ENCODE measurements at regions of chr6 and their contacts with region 1.

Region 1: GRCh38 chr6:70107852-70108629 is 194.8 kb downstream of the COL9A1 start:
- DNase-seq: no peak
- ATAC-seq: no peak
- H3K4me3 ChIP-seq: no peak overlapping the region
- H3K27ac ChIP-seq: no peak overlapping the region
- H3K4me1 ChIP-seq: no peaks in the 10 kb centered on the region
- H3K27me3 ChIP-seq: no peaks in the 10 kb centered on the region
- CTCF ChIP-seq: peak; percentile 14 to 76 (median 68)

Region 2: DNA sequence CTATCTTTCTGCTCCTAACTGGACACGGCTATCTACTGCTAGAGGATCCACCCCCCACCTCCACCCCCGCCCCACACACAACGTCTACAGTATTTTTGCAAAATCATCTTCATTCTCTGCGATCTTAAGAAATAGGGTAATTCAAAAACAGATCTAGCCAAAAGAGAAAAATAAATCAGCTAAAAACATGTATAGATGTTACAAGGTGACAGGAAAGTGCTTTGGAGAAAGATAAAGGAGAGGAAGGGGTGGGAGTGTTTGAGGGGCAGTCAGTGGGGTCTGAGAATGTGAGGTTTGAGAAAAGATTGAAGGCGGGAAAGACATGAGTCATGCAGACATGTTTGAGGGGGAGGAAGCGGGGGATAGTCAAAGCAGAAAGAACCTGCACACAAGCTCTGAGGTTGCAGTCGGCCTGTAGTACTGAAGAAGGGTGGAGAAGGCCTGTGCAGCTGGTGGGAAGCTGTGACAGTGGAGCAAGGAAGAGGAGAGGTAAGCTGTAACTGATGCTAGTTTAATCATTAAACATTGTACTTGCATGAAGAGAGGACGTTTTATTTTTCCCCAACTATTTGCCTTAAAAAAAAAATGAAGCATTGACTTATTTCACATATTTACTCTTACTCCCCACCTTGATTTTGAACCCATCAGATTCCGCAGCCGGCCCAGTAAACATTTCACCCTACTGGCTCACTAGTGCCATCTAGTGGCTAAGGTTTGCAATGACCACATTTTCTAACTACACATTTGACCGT is 1140.3 kb before region 1 on chr6:
- intact Hi-C with region 1: loop called in 1 of 10 experiments (anchors 10 kb)
- DNase-seq: peak; percentile 27 to 59
- ATAC-seq: peak in 6 of 8 donors; percentile 47 to 67 (median 60)
- H3K4me3 ChIP-seq: no peak overlapping the region
- H3K27ac ChIP-seq: no peak overlapping the region
- H3K4me1 ChIP-seq: peaks cover 0 to 8% (median 0%) of the 10 kb centered on the region in 9 donors
- H3K27me3 ChIP-seq: no peaks in the 10 kb centered on the region
- CTCF ChIP-seq: peak; percentile 72 to 91 (median 84)

Region 3: DNA sequence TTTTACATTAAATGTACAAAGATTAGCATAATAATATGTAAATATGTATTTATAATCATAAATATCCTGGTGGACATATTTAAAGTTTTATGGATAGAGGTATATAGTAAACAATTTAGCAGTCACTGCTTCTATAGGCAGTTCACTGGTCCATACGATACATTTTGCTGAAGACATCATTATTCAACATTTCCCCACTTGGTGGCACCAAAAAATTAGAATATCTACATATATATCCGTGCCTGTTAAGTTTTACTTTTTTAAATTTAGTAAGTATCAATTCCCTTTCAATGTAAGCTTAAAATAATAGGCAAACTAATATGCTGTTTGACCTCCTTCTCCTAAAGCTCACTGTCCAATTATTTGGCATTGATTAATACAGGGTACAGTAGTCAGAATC is 375.4 kb before region 1 on chr6:
- intact Hi-C with region 1: loop called in 4 of 10 experiments (anchors 10 kb)
- DNase-seq: no peak
- ATAC-seq: no peak
- H3K4me3 ChIP-seq: no peak overlapping the region
- H3K27ac ChIP-seq: no peak overlapping the region
- H3K4me1 ChIP-seq: no peaks in the 10 kb centered on the region
- H3K27me3 ChIP-seq: no peaks in the 10 kb centered on the region
- CTCF ChIP-seq: peak in 4 of 9 donors; percentile 10 to 32 (median 20)

Region 4: DNA sequence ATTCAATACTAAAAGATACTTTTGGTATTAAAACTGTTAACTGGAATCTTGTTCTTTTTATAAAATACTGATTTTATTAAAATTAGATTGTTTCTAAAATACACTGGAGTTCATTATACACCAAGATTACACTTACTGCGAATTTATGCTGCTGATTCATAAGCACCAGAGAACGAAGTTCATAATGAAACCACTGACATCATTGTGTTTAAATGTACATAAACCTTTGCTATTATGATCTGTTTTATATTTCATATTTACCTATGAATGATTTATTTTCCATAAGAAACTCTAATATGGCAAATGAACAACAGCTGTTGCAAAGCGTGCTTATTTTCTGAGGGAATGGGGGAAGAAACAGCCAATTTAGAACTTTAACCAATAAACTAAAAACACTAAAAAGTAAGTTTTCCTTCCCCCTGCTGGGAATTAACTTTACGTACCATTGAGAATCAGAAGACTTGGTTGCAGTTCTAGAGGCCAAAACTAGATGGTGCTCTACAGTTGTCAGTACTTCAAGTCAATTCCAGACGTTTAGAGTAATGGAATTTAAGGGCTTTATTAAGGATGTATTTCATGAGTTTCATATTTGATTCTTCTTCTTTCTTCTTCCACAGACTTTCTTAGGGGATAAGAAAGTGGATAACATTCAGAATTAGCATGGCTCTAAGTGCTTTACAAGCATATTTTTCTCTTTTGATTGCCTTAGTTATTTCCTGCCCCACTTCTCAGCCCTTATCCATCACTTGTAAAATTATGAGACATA is 272.4 kb before region 1 on chr6:
- intact Hi-C with region 1: loop called (anchors 2 to 10 kb)
- DNase-seq: peak in 1 of 2 donors; percentile 20
- ATAC-seq: peak in 2 of 8 donors; percentile 53 to 71
- H3K4me3 ChIP-seq: no peak overlapping the region
- H3K27ac ChIP-seq: no peak overlapping the region
- H3K4me1 ChIP-seq: no peaks in the 10 kb centered on the region
- H3K27me3 ChIP-seq: peaks cover 0 to 10% (median 0%) of the 10 kb centered on the region in 7 donors
- CTCF ChIP-seq: peak; percentile 32 to 88 (median 79)

Measured in heart right ventricle (tissue), 16 donors.